ENCODE measurements at regions of chr3 and their contacts with region 1.

Region 1: DNA sequence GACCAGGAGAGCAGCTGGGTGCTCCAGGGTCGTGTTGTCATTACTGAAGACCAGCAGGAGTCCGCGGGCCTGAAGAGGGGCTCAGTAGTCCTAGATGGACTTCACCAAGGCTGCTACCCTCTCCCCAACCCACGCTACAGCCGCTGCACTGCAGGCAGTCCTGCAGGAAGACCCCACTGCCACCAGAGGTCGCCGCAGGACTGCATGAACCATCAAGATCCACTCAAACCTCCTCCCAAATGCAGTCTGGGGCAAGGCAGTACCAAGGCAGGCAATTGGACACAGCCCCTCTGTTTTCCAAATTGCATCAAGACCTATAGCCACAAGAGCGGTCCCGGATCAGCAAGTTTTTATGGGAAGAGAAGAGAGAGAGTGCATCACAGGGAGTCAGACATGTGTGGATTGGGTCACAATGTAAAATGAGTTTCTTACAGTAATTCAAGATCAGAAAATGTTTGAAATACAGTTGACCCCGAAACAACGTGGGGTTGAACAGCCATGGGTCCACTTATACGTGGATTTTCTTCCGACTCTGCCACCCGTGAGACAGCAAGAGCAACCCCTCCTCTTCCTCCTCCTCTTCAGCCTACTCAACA is 46.7 kb downstream of the DZIP1L start:
- DNase-seq: peak; percentile 80
- ATAC-seq: peak; percentile 99
- H3K4me3 ChIP-seq: no peak overlapping the region
- H3K27ac ChIP-seq: no peak overlapping the region
- H3K4me1 ChIP-seq: peaks cover 13% of the 10 kb centered on the region
- H3K27me3 ChIP-seq: no peaks in the 10 kb centered on the region
- CTCF ChIP-seq: peak; percentile 97
- POLR2A ChIP-seq: no peak
- RAD21 ChIP-seq: peak; percentile 100

Region 2: DNA sequence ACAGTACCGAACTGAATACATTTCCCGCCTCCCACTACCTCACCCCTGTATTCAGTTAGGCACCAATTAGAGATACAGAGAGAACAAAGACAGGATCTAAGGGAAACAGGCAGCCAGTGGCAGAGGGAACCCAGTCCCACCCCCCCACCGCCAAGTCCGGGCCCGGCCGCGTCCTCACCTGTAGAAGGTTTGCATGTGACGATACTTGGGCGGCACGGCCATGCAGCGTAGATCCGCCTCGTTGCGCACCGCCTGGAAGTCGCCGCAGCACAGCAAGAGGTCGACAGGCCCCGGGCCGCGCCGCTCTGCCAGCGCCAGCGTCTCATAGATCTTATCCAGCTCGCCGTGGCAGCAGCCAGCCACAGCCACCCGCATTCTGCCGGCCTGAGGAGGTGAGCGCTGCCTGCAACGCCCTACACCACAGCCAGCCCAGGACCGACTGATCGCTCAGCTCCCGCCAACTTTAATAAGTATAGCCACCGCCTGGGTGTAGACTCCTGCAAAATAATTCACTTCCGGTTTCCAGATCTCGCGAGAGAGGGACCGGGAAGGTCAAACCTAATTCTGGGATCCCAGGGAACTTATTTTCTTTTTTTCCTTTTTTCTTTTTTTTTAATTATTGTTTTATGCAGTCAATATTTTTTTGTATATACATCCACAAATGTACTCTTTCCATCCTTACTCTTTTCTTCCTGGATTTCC is 105.9 kb after region 1 on chr3 and contains the start of gene DBR1:
- CTCF ChIA-PET with region 1: no interaction called
- POLR2A ChIA-PET with region 1: no interaction called
- dilution Hi-C with region 1: no loop called
- in situ Hi-C with region 1: loop called (anchors 10 kb)
- intact Hi-C with region 1: loop called (anchors 2 kb)
- DNase-seq: peak; percentile 80
- ATAC-seq: peak; percentile 96
- H3K4me3 ChIP-seq: peak within 1 kb of the TSS; percentile 87
- H3K27ac ChIP-seq: peak within 1 kb of the TSS; percentile 84
- H3K4me1 ChIP-seq: no peaks in the 10 kb centered on the region
- H3K27me3 ChIP-seq: no peaks in the 10 kb centered on the region; the same call in 1 of the 2 replicates
- CTCF ChIP-seq: no peak
- POLR2A ChIP-seq: peak; percentile 89
- RAD21 ChIP-seq: no peak
- total RNA-seq, gene DBR1: 12.5 and 17.5 TPM in 2 replicates

Region 3: DNA sequence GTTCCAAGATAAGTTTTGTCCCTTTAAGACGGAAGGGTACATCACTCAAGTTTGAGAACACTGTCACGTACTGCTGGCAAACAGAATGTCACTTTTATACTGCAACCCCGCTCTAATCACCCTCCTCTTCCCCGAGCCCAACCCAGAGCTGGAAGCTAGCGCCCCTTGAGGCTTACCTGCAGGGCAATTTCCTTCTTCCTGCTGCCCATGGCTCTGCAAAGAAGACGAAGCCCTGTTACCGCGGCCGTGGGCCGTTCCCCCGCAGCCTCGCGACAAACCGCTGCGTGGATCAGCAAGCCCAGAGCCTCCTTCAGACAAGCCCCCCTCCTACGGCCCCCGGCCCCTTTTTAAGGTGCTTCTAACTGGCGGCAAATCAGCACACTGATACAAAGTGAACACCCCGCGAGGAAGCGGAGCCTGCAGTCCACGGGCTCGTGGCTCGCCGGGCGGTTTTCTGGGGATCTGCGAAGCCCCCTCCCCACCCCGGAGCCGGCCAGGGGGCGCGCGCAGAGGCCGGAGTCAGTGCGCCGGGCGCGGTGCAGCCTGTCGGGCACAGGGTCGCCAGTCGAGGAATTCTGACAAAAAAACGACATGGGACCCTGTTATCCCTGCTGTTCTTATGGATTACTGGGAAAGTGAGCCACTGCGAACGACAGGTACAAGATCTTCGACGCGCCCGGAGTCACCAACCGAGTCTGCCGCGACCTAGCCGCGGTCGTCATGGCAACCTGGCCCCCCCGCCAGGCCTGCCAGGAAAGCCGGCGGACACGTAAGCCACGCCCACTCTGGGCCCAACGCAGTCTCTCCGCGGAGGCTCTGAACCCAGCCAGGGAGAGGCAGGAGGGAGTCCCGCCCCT is 260.7 kb after region 1 on chr3 and contains the start of gene NME9:
- CTCF ChIA-PET with region 1: no interaction called
- POLR2A ChIA-PET with region 1: no interaction called
- dilution Hi-C with region 1: no loop called
- in situ Hi-C with region 1: no loop called
- intact Hi-C with region 1: loop called (anchors 1 kb)
- DNase-seq: peak; percentile 73
- ATAC-seq: peak; percentile 97
- H3K4me3 ChIP-seq: peak within 1 kb of the TSS; percentile 62
- H3K27ac ChIP-seq: no peak within 1 kb of the TSS
- H3K4me1 ChIP-seq: no peaks in the 10 kb centered on the region
- H3K27me3 ChIP-seq: peaks cover under 1% of the 10 kb centered on the region
- CTCF ChIP-seq: peak; percentile 50
- POLR2A ChIP-seq: no peak
- RAD21 ChIP-seq: peak; percentile 36
- total RNA-seq, gene NME9: not detected in 2 replicates

Region 4: GRCh38 chr3:138426226-138426625 is 357.5 kb after region 1 on chr3:
- CTCF ChIA-PET with region 1: no interaction called
- POLR2A ChIA-PET with region 1: no interaction called
- dilution Hi-C with region 1: no loop called
- in situ Hi-C with region 1: no loop called
- intact Hi-C with region 1: loop called (anchors 5 kb)
- DNase-seq: peak; percentile 38
- ATAC-seq: peak; percentile 62; the same call in 1 of the 2 replicates
- H3K4me3 ChIP-seq: no peak overlapping the region
- H3K27ac ChIP-seq: no peak overlapping the region
- H3K4me1 ChIP-seq: no peaks in the 10 kb centered on the region
- H3K27me3 ChIP-seq: peaks cover 2% of the 10 kb centered on the region; the same call in 1 of the 2 replicates
- CTCF ChIP-seq: peak; percentile 71
- POLR2A ChIP-seq: no peak
- RAD21 ChIP-seq: peak; percentile 77

Region 5: GRCh38 chr3:138437281-138437680 is 368.6 kb after region 1 on chr3:
- CTCF ChIA-PET with region 1: no interaction called
- POLR2A ChIA-PET with region 1: no interaction called
- dilution Hi-C with region 1: no loop called
- in situ Hi-C with region 1: no loop called
- intact Hi-C with region 1: no loop called
- DNase-seq: no peak
- ATAC-seq: no peak
- H3K4me3 ChIP-seq: no peak overlapping the region
- H3K27ac ChIP-seq: no peak overlapping the region
- H3K4me1 ChIP-seq: peaks cover 8% of the 10 kb centered on the region; the same call in 1 of the 2 replicates
- H3K27me3 ChIP-seq: peaks cover 59% of the 10 kb centered on the region
- CTCF ChIP-seq: no peak
- POLR2A ChIP-seq: no peak
- RAD21 ChIP-seq: no peak